ENCODE measurements at regions of chr16 and their contacts with region 1.

Region 1: GRCh38 chr16:22659933-22660332 is 149.2 kb downstream of the NPIPB5 start:
- DNase-seq: no peak
- H3K4me3 ChIP-seq: no peak overlapping the region
- H3K27ac ChIP-seq: no peak overlapping the region
- H3K4me1 ChIP-seq: no peaks in the 10 kb centered on the region
- H3K27me3 ChIP-seq: peaks cover 0 to 2% of the 10 kb centered on the region in 2 donors
- CTCF ChIP-seq: no peak
- POLR2A ChIP-seq: no peak

Region 2: GRCh38 chr16:21253470-21253869 is 1406.5 kb before region 1 on chr16:
- intact Hi-C with region 1: loop called (anchors 5 kb)
- DNase-seq: no peak
- H3K4me3 ChIP-seq: no peak overlapping the region
- H3K27ac ChIP-seq: no peak overlapping the region
- H3K4me1 ChIP-seq: no peaks in the 10 kb centered on the region
- H3K27me3 ChIP-seq: no peaks in the 10 kb centered on the region
- CTCF ChIP-seq: no peak
- POLR2A ChIP-seq: no peak

Region 3: GRCh38 chr16:22346483-22346882 is 313.4 kb before region 1 on chr16:
- intact Hi-C with region 1: loop called (anchors 10 kb)
- DNase-seq: no peak
- H3K4me3 ChIP-seq: no peak overlapping the region
- H3K27ac ChIP-seq: peak overlapping the region; percentile 52 to 62
- H3K4me1 ChIP-seq: no peaks in the 10 kb centered on the region
- H3K27me3 ChIP-seq: no peaks in the 10 kb centered on the region
- CTCF ChIP-seq: no peak
- POLR2A ChIP-seq: no peak